IMR-90 (cell line): ENCODE measurements at regions of chr5 and their contacts with region 1.

Region 1: GRCh38 chr5:177497292-177498033 is at the start of gene PDLIM7:
- DNase-seq: peak; percentile 97
- ATAC-seq: peak; percentile 57
- H3K4me3 ChIP-seq: peak within 1 kb of the TSS; percentile 91
- H3K27ac ChIP-seq: peak within 1 kb of the TSS; percentile 100
- H3K4me1 ChIP-seq: peaks cover 40% of the 10 kb centered on the region
- H3K27me3 ChIP-seq: no peaks in the 10 kb centered on the region
- CTCF ChIP-seq: no peak
- POLR2A ChIP-seq: peak; percentile 98
- RAD21 ChIP-seq: no peak
- total RNA-seq, gene PDLIM7: 70.4 and 72.5 TPM in 2 replicates

Region 2: DNA sequence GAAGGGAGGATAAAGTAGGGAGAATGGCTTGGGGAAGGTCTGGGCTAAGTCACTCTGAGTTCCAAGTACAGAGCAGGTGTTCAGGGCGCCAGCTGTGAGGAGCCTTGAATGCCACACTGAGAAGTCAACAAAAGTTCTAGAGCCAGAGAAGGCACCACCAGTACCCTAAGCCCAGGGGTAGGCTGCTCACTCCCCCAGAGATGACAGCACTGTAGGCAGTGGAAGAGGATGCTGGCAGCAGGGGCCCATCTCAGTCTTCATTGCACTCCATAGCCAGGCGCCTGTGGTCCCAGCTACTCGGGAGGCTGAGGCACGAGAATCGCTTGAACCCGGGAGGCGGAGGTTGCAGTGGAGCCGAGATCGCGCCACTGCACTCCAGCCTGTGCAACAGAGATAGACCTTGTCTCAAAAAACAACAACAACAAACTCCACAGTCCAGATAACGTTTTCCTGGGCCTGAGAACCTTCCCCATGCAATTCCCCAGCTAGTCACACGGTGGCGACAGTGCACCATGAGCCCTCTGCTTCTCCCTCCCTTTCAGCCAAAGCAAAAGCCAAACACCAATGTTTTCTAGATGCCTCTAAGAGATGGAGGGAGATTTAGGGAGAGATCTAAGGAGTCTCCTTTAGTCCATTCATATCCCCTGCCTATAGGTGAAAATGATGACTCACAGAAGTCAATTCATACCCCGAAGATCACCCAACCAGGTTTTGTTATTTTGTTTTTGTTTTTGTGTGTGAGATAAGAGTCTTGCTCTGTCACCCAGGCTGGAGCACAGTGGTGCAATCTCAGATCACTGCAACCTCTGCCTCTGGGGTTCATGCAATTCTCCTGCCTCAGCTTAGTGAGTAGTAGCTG is 383.7 kb before region 1 on chr5:
- CTCF ChIA-PET with region 1: no interaction called
- POLR2A ChIA-PET with region 1: no interaction called
- dilution Hi-C with region 1: no loop called
- in situ Hi-C with region 1: no loop called
- intact Hi-C with region 1: loop called (anchors 2 kb)
- DNase-seq: peak; percentile 63
- ATAC-seq: peak; percentile 85
- H3K4me3 ChIP-seq: no peak overlapping the region
- H3K27ac ChIP-seq: no peak overlapping the region
- H3K4me1 ChIP-seq: no peaks in the 10 kb centered on the region; the same call in 1 of the 2 replicates
- H3K27me3 ChIP-seq: no peaks in the 10 kb centered on the region; the same call in 1 of the 2 replicates
- CTCF ChIP-seq: peak; percentile 98
- POLR2A ChIP-seq: peak; percentile 49; the same call in 1 of the 2 replicates
- RAD21 ChIP-seq: peak; percentile 100

Region 3: DNA sequence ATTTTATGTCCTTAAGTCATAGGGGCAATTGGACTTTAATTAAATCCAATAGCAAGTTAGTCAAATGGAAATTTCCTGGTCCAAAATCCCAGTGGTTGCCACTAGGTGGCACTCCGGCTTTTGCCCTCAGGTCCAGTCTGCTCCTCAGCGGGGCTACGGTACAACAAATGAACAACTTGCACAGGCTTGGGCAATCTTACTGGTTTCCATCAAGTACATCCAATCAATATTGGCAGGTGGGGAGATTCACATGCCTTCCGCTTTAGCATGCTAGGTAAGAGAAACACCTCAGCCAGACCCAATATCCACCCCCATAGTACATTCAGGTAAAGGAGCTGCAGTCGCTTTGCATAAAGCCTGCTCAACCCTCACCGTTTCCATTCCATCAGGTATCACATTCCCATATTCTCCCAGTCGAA is 179.5 kb before region 1 on chr5:
- CTCF ChIA-PET with region 1: no interaction called
- POLR2A ChIA-PET with region 1: no interaction called
- dilution Hi-C with region 1: no loop called
- in situ Hi-C with region 1: no loop called
- intact Hi-C with region 1: loop called (anchors 2 kb)
- DNase-seq: peak; percentile 80
- ATAC-seq: peak; percentile 92
- H3K4me3 ChIP-seq: no peak overlapping the region
- H3K27ac ChIP-seq: no peak overlapping the region
- H3K4me1 ChIP-seq: peaks cover under 1% of the 10 kb centered on the region; the same call in 1 of the 2 replicates
- H3K27me3 ChIP-seq: no peaks in the 10 kb centered on the region
- CTCF ChIP-seq: peak; percentile 95
- POLR2A ChIP-seq: no peak
- RAD21 ChIP-seq: peak; percentile 88

Region 4: GRCh38 chr5:177390363-177391300 is 106.8 kb before region 1 on chr5:
- CTCF ChIA-PET with region 1: interaction called, 6 read pairs
- POLR2A ChIA-PET with region 1: no interaction called
- dilution Hi-C with region 1: no loop called
- in situ Hi-C with region 1: no loop called
- intact Hi-C with region 1: loop called (anchors 2 kb)
- DNase-seq: peak; percentile 80
- ATAC-seq: peak; percentile 84
- H3K4me3 ChIP-seq: no peak overlapping the region
- H3K27ac ChIP-seq: no peak overlapping the region
- H3K4me1 ChIP-seq: peaks cover 16% of the 10 kb centered on the region
- H3K27me3 ChIP-seq: peaks cover 22% of the 10 kb centered on the region
- CTCF ChIP-seq: peak; percentile 95
- POLR2A ChIP-seq: no peak
- RAD21 ChIP-seq: peak; percentile 84

Region 5: GRCh38 chr5:177454397-177455035 is 42.9 kb before region 1 on chr5:
- CTCF ChIA-PET with region 1: interaction called, 6 read pairs
- POLR2A ChIA-PET with region 1: interaction called, 3 read pairs
- dilution Hi-C with region 1: no loop called
- in situ Hi-C with region 1: no loop called
- intact Hi-C with region 1: loop called (anchors 1 kb)
- DNase-seq: peak; percentile 80
- ATAC-seq: peak; percentile 58
- H3K4me3 ChIP-seq: peak overlapping the region; percentile 38
- H3K27ac ChIP-seq: no peak overlapping the region; the same call in 1 of the 2 replicates
- H3K4me1 ChIP-seq: peaks cover 8% of the 10 kb centered on the region
- H3K27me3 ChIP-seq: no peaks in the 10 kb centered on the region
- CTCF ChIP-seq: peak; percentile 99
- POLR2A ChIP-seq: 0 out of 2 replicates have a peak, but pooled peaks have one; percentile 24
- RAD21 ChIP-seq: peak; percentile 88

Region 6: GRCh38 chr5:177531253-177531951 is 33.9 kb after region 1 on chr5:
- CTCF ChIA-PET with region 1: no interaction called
- POLR2A ChIA-PET with region 1: no interaction called
- dilution Hi-C with region 1: no loop called
- in situ Hi-C with region 1: no loop called
- intact Hi-C with region 1: no loop called
- DNase-seq: no peak
- ATAC-seq: no peak
- H3K4me3 ChIP-seq: no peak overlapping the region
- H3K27ac ChIP-seq: no peak overlapping the region
- H3K4me1 ChIP-seq: peaks cover 3% of the 10 kb centered on the region; the same call in 1 of the 2 replicates
- H3K27me3 ChIP-seq: no peaks in the 10 kb centered on the region
- CTCF ChIP-seq: no peak
- POLR2A ChIP-seq: no peak
- RAD21 ChIP-seq: no peak

Region 7: GRCh38 chr5:178535299-178536175 is 1038.1 kb after region 1 on chr5:
- CTCF ChIA-PET with region 1: no interaction called
- POLR2A ChIA-PET with region 1: no interaction called
- dilution Hi-C with region 1: no loop called
- in situ Hi-C with region 1: no loop called
- intact Hi-C with region 1: no loop called
- DNase-seq: no peak
- ATAC-seq: no peak
- H3K4me3 ChIP-seq: no peak overlapping the region
- H3K27ac ChIP-seq: no peak overlapping the region
- H3K4me1 ChIP-seq: no peaks in the 10 kb centered on the region
- H3K27me3 ChIP-seq: no peaks in the 10 kb centered on the region
- CTCF ChIP-seq: no peak
- POLR2A ChIP-seq: no peak
- RAD21 ChIP-seq: no peak